CD8-positive, alpha-beta T cell (primary cell): ENCODE measurements at regions of chr10 and their contacts with region 1.

Region 1: DNA sequence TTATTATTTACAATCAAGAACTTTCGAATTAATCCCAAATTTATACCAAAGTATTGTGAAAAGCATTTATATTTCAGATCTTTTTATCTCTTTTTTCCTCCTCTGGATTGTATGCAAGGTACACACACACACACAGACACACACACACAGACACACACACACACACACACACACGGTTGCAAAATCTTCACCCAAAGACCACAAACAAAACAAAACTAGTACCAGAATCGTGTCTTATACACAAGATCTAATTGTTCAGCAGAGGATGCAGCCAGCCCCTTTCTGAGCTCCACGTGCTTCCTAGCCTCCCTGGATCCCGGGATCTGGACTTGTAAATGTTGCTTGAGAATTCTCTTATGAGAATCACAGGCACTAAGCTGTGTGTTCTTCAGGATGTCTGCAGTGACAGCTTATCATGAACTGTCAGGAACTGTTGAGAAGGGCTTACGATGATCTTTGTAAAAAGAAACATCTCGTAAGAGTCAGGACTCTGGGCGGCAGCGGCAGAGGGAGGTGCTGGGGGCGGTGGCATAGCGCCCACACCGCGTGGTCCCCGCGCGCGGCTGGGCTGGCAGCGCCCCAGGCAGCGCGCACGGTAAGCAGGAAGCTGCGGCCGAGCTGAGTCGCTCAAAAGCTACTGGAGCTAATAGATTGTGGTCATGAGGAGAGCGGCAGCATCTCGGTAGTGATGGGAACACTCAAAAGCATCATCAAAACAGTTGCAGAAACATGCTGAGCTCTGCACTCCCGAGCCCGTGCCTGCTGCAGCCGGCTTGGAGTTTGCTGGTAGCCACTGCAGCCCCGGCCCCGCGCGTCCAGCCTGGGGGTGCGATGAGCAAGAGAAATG is 277.6 kb downstream of the GATA3 start:
- DNase-seq: peak; percentile 82 to 98 (median 88)
- ATAC-seq: peak; percentile 93
- H3K4me3 ChIP-seq: peak overlapping the region; percentile 53 to 63
- H3K4me3 Mint-ChIP-seq: peak overlapping the region; percentile 76
- H3K27ac ChIP-seq: peak overlapping the region; percentile 85 to 92
- H3K27ac Mint-ChIP-seq: peak overlapping the region; percentile 85
- H3K4me1 ChIP-seq: peaks cover 23% of the 10 kb centered on the region
- H3K4me1 Mint-ChIP-seq: peaks cover 35% of the 10 kb centered on the region
- H3K27me3 ChIP-seq: no peaks in the 10 kb centered on the region
- H3K27me3 Mint-ChIP-seq: no peaks in the 10 kb centered on the region
- CTCF ChIP-seq: no peak

Region 2: GRCh38 chr10:7818295-7819122 is 513.6 kb before region 1 on chr10 and contains the start of gene TAF3:
- CTCF ChIA-PET with region 1: no interaction called
- POLR2A ChIA-PET with region 1: no interaction called
- intact Hi-C with region 1: loop called in 1 of 2 experiments (anchors 10 kb)
- DNase-seq: peak; percentile 88 to 95 (median 92)
- ATAC-seq: peak; percentile 92
- H3K4me3 ChIP-seq: peak within 1 kb of the TSS; percentile 93 to 99
- H3K4me3 Mint-ChIP-seq: peak within 1 kb of the TSS; percentile 98
- H3K27ac ChIP-seq: peak within 1 kb of the TSS; percentile 64 to 70
- H3K27ac Mint-ChIP-seq: peak within 1 kb of the TSS; percentile 91
- H3K4me1 ChIP-seq: peaks cover 25% of the 10 kb centered on the region
- H3K4me1 Mint-ChIP-seq: peaks cover 44% of the 10 kb centered on the region
- H3K27me3 ChIP-seq: no peaks in the 10 kb centered on the region
- H3K27me3 Mint-ChIP-seq: no peaks in the 10 kb centered on the region
- CTCF ChIP-seq: no peak
- total RNA-seq, gene TAF3: 12.1 to 12.4 TPM

Region 3: DNA sequence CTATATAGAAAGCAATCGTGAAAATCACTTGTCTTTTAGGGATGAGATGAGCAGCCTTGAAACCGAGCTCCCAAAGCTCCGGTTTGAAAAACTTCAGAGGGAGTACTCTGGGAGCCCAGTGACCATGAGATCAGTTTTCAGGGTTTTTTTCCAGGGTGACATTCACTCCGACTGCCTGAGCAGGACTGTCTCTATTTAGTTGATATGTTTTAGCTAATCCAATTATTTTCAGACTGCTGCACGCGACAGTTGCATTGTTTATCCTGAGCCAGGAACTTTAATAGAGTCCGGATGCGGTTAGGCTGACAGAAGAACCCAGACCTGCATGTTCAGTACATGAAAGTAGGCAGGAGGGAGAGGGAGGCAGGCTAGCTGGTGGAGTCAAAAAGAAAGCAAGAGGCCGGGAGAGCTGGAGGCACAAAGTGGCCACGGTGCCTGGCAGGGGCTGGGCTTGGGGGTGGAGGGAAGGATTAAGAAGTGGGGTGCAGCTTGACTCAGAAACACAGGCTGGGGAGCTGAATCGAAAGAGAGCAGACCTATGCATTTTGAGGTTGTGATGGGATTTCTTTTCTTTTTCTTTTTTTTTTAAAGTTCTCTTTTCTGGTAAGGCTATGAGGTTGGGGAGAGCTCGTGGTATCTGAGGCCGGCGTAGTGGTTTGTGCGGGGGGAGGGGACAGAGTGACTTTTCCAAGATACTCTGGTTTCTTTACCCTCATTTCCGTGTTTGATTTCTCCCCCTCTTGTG is 272.0 kb before region 1 on chr10:
- CTCF ChIA-PET with region 1: interaction called, 7 read pairs
- POLR2A ChIA-PET with region 1: interaction called, 38 read pairs
- intact Hi-C with region 1: no loop called
- DNase-seq: peak in 7 of 9 experiments; percentile 43 to 83 (median 66)
- ATAC-seq: peak; percentile 30
- H3K4me3 ChIP-seq: peak overlapping the region; percentile 40 to 42
- H3K4me3 Mint-ChIP-seq: peak overlapping the region; percentile 89
- H3K27ac ChIP-seq: peak overlapping the region; percentile 50 to 78
- H3K27ac Mint-ChIP-seq: peak overlapping the region; percentile 93
- H3K4me1 ChIP-seq: peaks cover 64% of the 10 kb centered on the region
- H3K4me1 Mint-ChIP-seq: peaks cover 80% of the 10 kb centered on the region
- H3K27me3 ChIP-seq: no peaks in the 10 kb centered on the region
- H3K27me3 Mint-ChIP-seq: no peaks in the 10 kb centered on the region
- CTCF ChIP-seq: no peak

Region 4: DNA sequence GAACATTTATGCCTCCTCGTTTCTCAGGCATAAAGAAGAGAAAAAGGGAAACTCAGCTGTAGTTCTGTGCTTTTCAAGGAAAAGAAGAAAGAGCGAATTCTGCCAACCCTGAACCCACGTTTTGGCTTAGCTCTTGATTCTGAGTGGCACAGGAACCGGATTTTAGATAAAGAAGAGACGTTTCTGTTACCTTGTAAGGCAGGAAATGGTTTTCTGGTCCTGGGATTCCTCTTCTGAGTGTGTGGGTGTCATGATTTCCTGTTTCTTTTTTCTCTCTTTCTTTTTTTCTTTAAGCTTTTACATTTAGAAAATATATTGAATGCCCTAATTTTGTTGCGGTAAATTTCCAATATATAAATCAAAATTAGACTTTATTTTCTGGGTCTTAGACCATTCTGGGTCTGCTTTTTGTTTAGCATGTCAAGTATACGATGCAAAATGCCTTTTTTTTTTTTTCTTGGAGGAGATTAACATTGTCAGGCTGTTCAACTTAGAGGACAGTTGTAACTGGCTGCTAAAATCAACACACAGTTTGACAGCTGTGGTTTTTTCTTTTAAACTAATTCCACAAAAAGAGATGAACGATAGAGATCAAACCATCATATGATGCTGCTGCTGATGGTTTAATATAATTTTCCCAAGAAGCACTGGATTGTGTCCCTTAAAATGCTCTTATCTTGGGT is 86.8 kb before region 1 on chr10:
- CTCF ChIA-PET with region 1: no interaction called
- POLR2A ChIA-PET with region 1: no interaction called
- intact Hi-C with region 1: loop called (anchors 2 to 5 kb)
- DNase-seq: peak in 2 of 9 experiments; percentile 57 to 77
- ATAC-seq: peak; percentile 88
- H3K4me3 ChIP-seq: peak overlapping the region; percentile 3 to 18
- H3K4me3 Mint-ChIP-seq: peak overlapping the region; percentile 67
- H3K27ac ChIP-seq: peak overlapping the region in 1 of 2 experiments; percentile 74
- H3K27ac Mint-ChIP-seq: peak overlapping the region; percentile 81
- H3K4me1 ChIP-seq: peaks cover 29% of the 10 kb centered on the region
- H3K4me1 Mint-ChIP-seq: peaks cover 42% of the 10 kb centered on the region
- H3K27me3 ChIP-seq: no peaks in the 10 kb centered on the region
- H3K27me3 Mint-ChIP-seq: no peaks in the 10 kb centered on the region
- CTCF ChIP-seq: no peak

Region 5: GRCh38 chr10:8404391-8405120 is 72.5 kb after region 1 on chr10:
- CTCF ChIA-PET with region 1: no interaction called
- POLR2A ChIA-PET with region 1: interaction called, 4 read pairs
- intact Hi-C with region 1: loop called (anchors 1 to 2 kb)
- DNase-seq: peak in 6 of 9 experiments; percentile 31 to 93 (median 48)
- ATAC-seq: peak; percentile 71
- H3K4me3 ChIP-seq: peak overlapping the region; percentile 14 to 41
- H3K4me3 Mint-ChIP-seq: peak overlapping the region; percentile 74
- H3K27ac ChIP-seq: peak overlapping the region; percentile 66 to 83
- H3K27ac Mint-ChIP-seq: peak overlapping the region; percentile 90
- H3K4me1 ChIP-seq: peaks cover 43% of the 10 kb centered on the region
- H3K4me1 Mint-ChIP-seq: peaks cover 67% of the 10 kb centered on the region
- H3K27me3 ChIP-seq: no peaks in the 10 kb centered on the region
- H3K27me3 Mint-ChIP-seq: no peaks in the 10 kb centered on the region
- CTCF ChIP-seq: no peak

Region 6: GRCh38 chr10:8444630-8445029 is 112.5 kb after region 1 on chr10:
- CTCF ChIA-PET with region 1: interaction called, 3 read pairs
- POLR2A ChIA-PET with region 1: no interaction called
- intact Hi-C with region 1: loop called in 1 of 2 experiments (anchors 1 kb)
- DNase-seq: peak; percentile 9 to 82 (median 65)
- ATAC-seq: peak; percentile 100
- H3K4me3 ChIP-seq: no peak overlapping the region
- H3K4me3 Mint-ChIP-seq: no peak overlapping the region
- H3K27ac ChIP-seq: no peak overlapping the region
- H3K27ac Mint-ChIP-seq: no peak overlapping the region
- H3K4me1 ChIP-seq: peaks cover 6% of the 10 kb centered on the region
- H3K4me1 Mint-ChIP-seq: peaks cover 10% of the 10 kb centered on the region
- H3K27me3 ChIP-seq: no peaks in the 10 kb centered on the region
- H3K27me3 Mint-ChIP-seq: peaks cover 4% of the 10 kb centered on the region
- CTCF ChIP-seq: no peak

Region 7: DNA sequence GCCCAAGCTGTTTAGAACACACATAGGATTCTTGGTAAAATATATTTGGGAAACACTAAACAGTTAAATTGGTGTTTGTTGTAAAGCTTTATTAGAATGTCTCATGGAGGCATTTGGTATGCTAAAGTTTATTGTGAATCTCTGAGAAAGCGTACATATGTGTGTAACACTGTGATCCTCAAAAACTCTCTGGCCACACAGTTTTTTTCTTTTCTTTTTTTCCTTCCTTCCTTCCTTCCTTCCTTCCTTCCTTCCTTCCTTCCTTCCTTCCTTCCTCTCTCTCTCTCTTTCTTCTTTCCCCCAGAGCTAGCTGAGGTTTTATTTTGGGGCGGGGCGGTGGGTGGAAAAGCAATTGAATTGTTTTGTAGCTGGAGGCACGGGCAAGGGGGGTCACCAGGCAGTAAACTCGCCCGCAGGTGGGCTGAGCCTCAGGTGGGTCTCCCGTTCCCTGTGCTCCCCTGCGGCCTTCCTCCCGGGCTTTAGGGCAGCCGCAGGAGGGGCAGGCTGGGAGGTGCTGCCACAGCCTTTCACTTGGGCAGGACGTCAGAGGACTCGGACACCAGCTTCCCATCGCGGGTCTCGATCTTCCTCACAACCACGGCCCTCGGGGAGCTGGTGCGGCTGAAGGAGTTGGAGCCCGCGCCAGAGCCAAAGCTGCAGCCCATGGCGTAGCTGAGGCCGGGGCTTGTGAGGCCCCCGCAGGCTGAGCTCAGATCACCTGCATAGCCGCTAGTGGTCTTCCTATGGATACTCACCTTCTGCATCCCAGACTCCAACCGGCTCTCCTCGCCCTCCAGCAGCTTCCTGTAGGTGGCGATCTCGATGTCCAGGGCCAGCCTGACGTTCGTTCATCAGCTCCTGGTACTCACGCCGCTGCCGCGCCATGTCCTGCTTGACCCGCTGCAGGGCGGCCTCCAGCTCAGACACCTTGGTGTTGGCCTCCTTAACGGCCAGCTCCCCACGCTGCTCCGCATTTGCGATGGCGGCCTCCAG is 181.3 kb after region 1 on chr10:
- CTCF ChIA-PET with region 1: no interaction called
- POLR2A ChIA-PET with region 1: no interaction called
- intact Hi-C with region 1: no loop called
- DNase-seq: peak in 1 of 9 experiments; percentile 3
- ATAC-seq: no peak
- H3K4me3 ChIP-seq: no peak overlapping the region
- H3K4me3 Mint-ChIP-seq: no peak overlapping the region
- H3K27ac ChIP-seq: no peak overlapping the region
- H3K27ac Mint-ChIP-seq: no peak overlapping the region
- H3K4me1 ChIP-seq: no peaks in the 10 kb centered on the region
- H3K4me1 Mint-ChIP-seq: no peaks in the 10 kb centered on the region
- H3K27me3 ChIP-seq: no peaks in the 10 kb centered on the region
- H3K27me3 Mint-ChIP-seq: peaks cover 23% of the 10 kb centered on the region
- CTCF ChIP-seq: no peak

Region 8: GRCh38 chr10:9209105-9209798 is 877.1 kb after region 1 on chr10:
- CTCF ChIA-PET with region 1: no interaction called
- POLR2A ChIA-PET with region 1: no interaction called
- intact Hi-C with region 1: loop called in 1 of 2 experiments (anchors 1 kb)
- DNase-seq: peak; percentile 51 to 84 (median 69)
- ATAC-seq: peak; percentile 64
- H3K4me3 ChIP-seq: no peak overlapping the region
- H3K4me3 Mint-ChIP-seq: no peak overlapping the region
- H3K27ac ChIP-seq: no peak overlapping the region
- H3K27ac Mint-ChIP-seq: no peak overlapping the region
- H3K4me1 ChIP-seq: peaks cover 6% of the 10 kb centered on the region
- H3K4me1 Mint-ChIP-seq: peaks cover 5% of the 10 kb centered on the region
- H3K27me3 ChIP-seq: no peaks in the 10 kb centered on the region
- H3K27me3 Mint-ChIP-seq: peaks cover 6% of the 10 kb centered on the region
- CTCF ChIP-seq: peak; percentile 96